ENCODE measurements at regions of chr19 and their contacts with region 1.

Region 1: GRCh38 chr19:46788262-46788967 is at the start of gene SLC1A5:
- DNase-seq: peak; percentile 99
- ATAC-seq: peak; percentile 71
- H3K4me3 Mint-ChIP-seq: peak within 1 kb of the TSS; percentile 98
- H3K27ac Mint-ChIP-seq: peak within 1 kb of the TSS; percentile 96
- H3K4me1 Mint-ChIP-seq: peaks cover 63% of the 10 kb centered on the region
- H3K27me3 Mint-ChIP-seq: no peaks in the 10 kb centered on the region
- total RNA-seq, gene SLC1A5: 176 to 178 TPM

Region 2: DNA sequence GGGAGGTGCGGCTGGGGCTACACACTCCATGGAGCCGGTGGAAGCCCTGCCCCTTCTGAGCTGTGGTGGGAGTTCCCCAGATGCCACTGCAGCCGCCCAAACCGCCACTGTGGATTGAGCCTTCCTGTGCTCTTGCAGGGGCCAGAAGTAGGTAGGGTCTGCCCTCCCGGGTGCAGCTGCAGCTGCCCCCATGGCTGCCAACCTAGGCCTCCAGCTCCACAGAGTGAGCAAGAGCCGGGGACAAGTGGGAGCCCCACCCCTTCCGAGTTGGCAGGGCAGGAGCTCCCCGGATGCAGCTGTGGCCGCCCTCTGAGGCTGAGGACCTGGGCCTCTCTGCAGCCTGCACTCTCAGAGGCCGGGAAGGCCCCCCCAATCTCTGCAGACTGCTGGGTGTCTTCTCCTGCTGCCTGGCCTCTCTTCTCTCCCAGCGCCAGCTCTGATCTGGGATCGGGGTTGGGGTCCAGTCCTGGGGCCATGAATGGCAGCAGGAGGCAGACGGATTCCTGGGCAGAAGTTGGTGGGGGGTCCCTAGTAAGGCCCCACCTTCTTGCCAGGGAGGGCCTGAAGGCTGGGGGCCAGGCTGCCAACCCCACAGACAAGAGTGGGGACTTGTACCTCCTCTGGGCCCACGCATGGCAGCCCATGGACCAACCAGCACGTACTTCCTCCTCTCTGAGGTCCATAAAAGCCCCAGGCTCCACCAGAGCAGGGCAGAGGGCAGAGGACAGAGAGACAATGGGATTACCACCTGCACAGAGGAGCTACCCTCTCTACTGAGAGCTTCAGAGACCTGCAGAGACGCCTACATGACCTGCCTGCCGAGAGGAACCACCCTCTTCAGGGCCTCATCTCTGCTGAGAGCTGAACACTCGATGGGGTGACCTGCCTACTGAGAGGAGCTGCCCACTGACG is 33.3 kb after region 1 on chr19:
- CTCF ChIA-PET with region 1: interaction called, 14 read pairs
- POLR2A ChIA-PET with region 1: interaction called, 51 read pairs
- DNase-seq: peak; percentile 83
- ATAC-seq: peak; percentile 91
- H3K4me3 Mint-ChIP-seq: peak overlapping the region; percentile 45
- H3K27ac Mint-ChIP-seq: peak overlapping the region; percentile 84
- H3K4me1 Mint-ChIP-seq: peaks cover 51% of the 10 kb centered on the region
- H3K27me3 Mint-ChIP-seq: no peaks in the 10 kb centered on the region

Region 3: GRCh38 chr19:46890423-46891170 is 102.2 kb after region 1 on chr19:
- CTCF ChIA-PET with region 1: no interaction called
- POLR2A ChIA-PET with region 1: no interaction called
- DNase-seq: no peak
- ATAC-seq: no peak
- H3K4me3 Mint-ChIP-seq: no peak overlapping the region
- H3K27ac Mint-ChIP-seq: no peak overlapping the region
- H3K4me1 Mint-ChIP-seq: peaks cover 5% of the 10 kb centered on the region
- H3K27me3 Mint-ChIP-seq: no peaks in the 10 kb centered on the region